ENCODE measurements at regions of chr7 and their contacts with region 1.

Region 1: DNA sequence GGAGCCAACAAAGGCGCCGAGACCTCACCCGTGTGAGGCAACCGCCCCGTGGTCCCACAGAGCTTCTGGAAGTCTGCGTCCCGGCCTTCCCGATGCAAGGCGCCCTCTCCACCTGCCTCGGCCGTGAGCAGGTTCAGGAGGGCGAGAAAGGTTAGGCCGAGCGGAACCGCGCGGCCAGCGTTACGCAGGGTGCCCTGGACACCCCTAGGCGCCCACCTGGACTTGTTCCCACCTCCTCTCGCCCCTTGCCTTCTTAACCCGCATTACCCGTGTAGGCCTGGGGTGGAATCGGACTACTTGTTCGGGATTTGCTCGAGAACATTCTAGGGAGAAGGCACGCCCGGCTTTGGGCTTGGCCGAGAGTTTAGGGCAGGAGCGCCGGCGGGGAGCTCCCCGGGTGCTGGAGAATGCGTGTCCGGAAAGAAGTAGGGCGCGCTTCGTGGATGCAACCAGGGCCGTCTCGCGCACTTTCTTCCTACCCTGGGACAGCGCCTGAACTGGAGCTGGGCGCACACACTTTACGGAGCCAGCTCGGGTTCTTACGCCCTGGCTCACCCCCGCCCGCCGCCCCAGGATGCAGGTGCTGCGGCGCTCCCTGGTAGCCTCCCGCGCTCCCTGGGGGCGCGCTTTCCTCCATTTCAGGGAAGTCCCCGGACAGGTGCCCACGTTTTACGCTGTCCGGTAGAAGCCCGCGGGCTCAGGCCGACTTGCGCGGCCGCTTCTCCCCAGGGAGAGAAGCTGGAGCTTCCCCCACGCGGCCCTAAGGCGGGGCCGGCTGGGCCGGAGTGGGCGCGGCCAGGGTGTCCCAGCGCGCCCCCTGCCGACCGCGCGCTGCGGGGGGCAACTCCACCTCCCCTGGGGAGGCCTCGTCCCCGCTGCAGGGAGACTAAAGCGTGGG is 74.5 kb downstream of the INSIG1 start:
- H3K4me3 Mint-ChIP-seq: peak overlapping the region; percentile 80
- H3K27ac Mint-ChIP-seq: no peak overlapping the region
- H3K4me1 Mint-ChIP-seq: peaks cover 60% of the 10 kb centered on the region
- H3K27me3 Mint-ChIP-seq: peaks cover 86% of the 10 kb centered on the region

Region 2: GRCh38 chr7:155398944-155399343 is 26.8 kb after region 1 on chr7:
- intact Hi-C with region 1: no loop called
- H3K4me3 Mint-ChIP-seq: no peak overlapping the region
- H3K27ac Mint-ChIP-seq: no peak overlapping the region
- H3K4me1 Mint-ChIP-seq: no peaks in the 10 kb centered on the region
- H3K27me3 Mint-ChIP-seq: peaks cover 30% of the 10 kb centered on the region

Region 3: GRCh38 chr7:155456738-155457564 is 84.8 kb after region 1 on chr7:
- intact Hi-C with region 1: loop called (anchors 10 kb)
- H3K4me3 Mint-ChIP-seq: peak overlapping the region; percentile 73
- H3K27ac Mint-ChIP-seq: no peak overlapping the region
- H3K4me1 Mint-ChIP-seq: peaks cover 42% of the 10 kb centered on the region
- H3K27me3 Mint-ChIP-seq: peaks cover 88% of the 10 kb centered on the region

Region 4: GRCh38 chr7:155763691-155764437 is 391.7 kb after region 1 on chr7:
- intact Hi-C with region 1: loop called (anchors 10 kb)
- H3K4me3 Mint-ChIP-seq: peak overlapping the region; percentile 60
- H3K27ac Mint-ChIP-seq: peak overlapping the region; percentile 58
- H3K4me1 Mint-ChIP-seq: peaks cover 79% of the 10 kb centered on the region
- H3K27me3 Mint-ChIP-seq: no peaks in the 10 kb centered on the region